BJ (cell line): ENCODE measurements at regions of chr17 and their contacts with region 1.

Region 1: DNA sequence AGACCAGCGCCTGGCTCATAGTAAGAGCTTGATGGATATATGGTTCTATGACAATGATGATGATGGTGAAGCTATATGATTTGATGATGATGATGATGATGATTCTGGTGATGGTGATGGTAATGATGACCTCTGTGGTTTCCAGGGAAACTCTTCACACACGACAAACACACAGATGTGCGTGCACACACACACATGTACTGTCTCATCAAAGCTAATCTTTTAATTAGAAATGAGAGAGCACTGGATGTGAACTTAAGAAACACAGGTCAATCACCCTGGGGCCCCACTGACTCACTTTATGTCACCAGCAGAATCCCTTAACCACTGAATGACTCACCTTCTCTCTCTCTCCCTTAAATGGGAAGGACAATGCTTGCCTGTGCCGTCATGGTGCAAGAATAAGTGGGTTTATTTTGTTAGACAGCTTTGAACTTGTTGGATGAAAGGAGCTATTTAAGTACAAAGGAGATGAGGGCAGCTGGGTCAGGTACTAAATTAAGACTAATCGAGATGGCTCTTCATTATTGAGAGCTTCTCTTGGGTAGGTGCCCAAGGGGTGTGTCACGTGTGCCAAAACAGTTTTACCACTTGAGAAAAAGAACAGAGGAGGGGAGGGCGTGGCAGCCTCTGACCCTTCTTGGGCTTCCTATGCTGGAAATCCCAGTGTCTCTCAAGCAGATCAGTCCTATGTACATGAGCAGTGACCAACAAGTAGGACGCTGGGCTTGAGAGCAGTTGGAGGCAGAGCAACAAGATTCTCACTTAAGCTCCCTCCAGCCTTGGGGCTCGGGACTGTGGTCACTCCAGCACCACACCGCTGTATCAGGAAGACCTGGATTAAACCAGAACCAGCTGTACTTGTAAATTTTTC is 6.6 kb upstream of the KRT31 start:
- DNase-seq: peak; percentile 94
- H3K4me3 ChIP-seq: no peak overlapping the region
- H3K27me3 ChIP-seq: no peaks in the 10 kb centered on the region
- CTCF ChIP-seq: no peak

Region 2: DNA sequence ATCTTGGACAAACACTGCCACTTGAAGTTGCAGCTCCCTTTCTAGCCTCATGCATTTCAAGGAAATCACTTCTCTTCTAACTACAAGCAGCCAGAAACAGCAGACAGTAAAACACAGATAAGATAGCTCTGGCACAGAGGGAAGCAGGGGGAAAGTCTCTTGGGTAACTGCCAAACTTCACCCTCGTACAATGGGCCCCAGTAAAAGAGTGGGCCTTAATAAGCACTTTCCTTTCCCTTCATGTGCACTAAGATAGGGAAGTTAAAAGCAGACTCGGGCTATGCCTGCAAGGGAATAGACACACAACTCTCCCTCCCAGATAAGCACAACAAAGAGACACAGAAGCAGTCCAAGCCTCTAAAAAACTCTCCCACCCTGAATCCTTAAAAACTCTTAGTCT is 250.2 kb before region 1 on chr17:
- CTCF ChIA-PET with region 1: no interaction called
- POLR2A ChIA-PET with region 1: no interaction called
- DNase-seq: no peak
- H3K4me3 ChIP-seq: no peak overlapping the region
- H3K27me3 ChIP-seq: no peaks in the 10 kb centered on the region
- CTCF ChIP-seq: no peak

Region 3: GRCh38 chr17:41211845-41212466 is 192.1 kb before region 1 on chr17:
- CTCF ChIA-PET with region 1: no interaction called
- POLR2A ChIA-PET with region 1: no interaction called
- DNase-seq: peak; percentile 52
- H3K4me3 ChIP-seq: no peak overlapping the region
- H3K27me3 ChIP-seq: no peaks in the 10 kb centered on the region
- CTCF ChIP-seq: no peak

Region 4: GRCh38 chr17:41417576-41418015 is 13.6 kb after region 1 on chr17:
- CTCF ChIA-PET with region 1: interaction called, 28 read pairs
- POLR2A ChIA-PET with region 1: interaction called, 5 read pairs
- DNase-seq: no peak
- H3K4me3 ChIP-seq: no peak overlapping the region
- H3K27me3 ChIP-seq: no peaks in the 10 kb centered on the region
- CTCF ChIP-seq: peak; percentile 29; the same call in 1 of the 2 replicates

Region 5: DNA sequence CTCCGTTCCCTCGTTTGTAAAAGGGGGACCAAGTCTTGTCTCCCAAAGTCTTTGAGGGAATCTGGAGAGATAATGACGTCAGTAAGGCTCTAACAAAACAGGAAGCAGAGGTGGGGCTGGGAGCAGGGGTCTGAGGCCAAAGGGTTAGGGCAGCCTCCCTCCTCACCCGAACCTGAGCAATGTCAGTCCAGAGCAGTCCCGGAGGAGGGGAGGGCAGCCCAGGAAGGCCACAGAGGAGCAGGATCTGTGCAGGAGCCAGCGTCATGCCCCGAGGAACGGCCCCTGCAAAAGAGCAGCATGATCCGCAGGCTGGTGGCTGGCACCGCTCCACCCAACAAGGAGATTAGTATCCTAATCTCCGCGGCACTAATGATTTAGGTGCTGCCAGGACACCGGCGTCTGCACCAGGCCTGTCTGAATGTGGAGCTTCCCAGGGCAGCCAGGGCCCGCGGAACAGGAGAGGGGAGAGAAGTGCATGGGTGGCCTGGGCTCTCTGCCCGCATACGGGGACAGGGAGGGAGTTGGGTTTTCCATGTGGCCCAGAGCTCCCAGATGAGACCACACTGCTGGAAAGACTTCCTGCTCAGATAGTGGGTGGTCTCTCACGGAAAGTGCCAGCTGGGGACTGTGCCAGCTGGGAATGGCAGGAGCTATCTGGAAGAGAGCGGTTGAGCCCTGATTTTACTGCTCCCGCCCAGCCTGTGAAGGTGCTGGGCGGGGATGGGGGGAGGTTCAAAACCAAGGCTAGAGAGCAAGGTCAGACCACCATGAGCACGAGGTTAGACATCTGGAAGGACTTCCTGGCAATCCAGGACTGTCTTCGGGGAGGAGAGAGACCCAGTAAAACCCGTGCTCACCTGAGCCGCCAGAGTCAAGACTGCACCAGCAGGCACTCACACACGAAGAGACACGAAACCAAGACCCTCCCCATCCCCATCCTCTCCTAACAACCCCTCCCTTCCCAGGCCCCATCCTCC is 231.4 kb after region 1 on chr17:
- CTCF ChIA-PET with region 1: no interaction called
- POLR2A ChIA-PET with region 1: no interaction called
- DNase-seq: no peak
- H3K4me3 ChIP-seq: no peak overlapping the region
- H3K27me3 ChIP-seq: no peaks in the 10 kb centered on the region
- CTCF ChIP-seq: no peak